ENCODE measurements at regions of chr3 and their contacts with region 1.

Region 1: GRCh38 chr3:7504886-7505775 is 644.2 kb downstream of the GRM7 start:
- DNase-seq: peak; percentile 83
- ATAC-seq: peak; percentile 92
- H3K4me3 ChIP-seq: peak overlapping the region in 1 of 2 experiments; percentile 12; a peak in 2 of 4 replicates
- H3K27ac ChIP-seq: peak overlapping the region; percentile 60
- H3K4me1 ChIP-seq: peaks cover 25 to 38% of the 10 kb centered on the region in 2 experiments
- H3K27me3 ChIP-seq: no peaks in the 10 kb centered on the region
- CTCF ChIP-seq: 0 out of 6 replicates have a peak, but pooled peaks of 1 of the 3 experiments have one; percentile 20
- POLR2A ChIP-seq: no peak
- RAD21 ChIP-seq: peak; percentile 21; the same call in 1 of the 2 replicates

Region 2: GRCh38 chr3:7876741-7877297 is 371.7 kb after region 1 on chr3:
- CTCF ChIA-PET with region 1: no interaction called
- POLR2A ChIA-PET with region 1: no interaction called
- RAD21 ChIA-PET with region 1: no interaction called
- intact Hi-C with region 1: loop called (anchors 5 kb)
- DNase-seq: peak; percentile 97
- ATAC-seq: peak; percentile 80
- H3K4me3 ChIP-seq: peak overlapping the region; percentile 14 to 32
- H3K27ac ChIP-seq: peak overlapping the region; percentile 97
- H3K4me1 ChIP-seq: peaks cover 62 to 78% of the 10 kb centered on the region in 2 experiments
- H3K27me3 ChIP-seq: no peaks in the 10 kb centered on the region
- CTCF ChIP-seq: no peak
- POLR2A ChIP-seq: no peak
- RAD21 ChIP-seq: peak; percentile 41

Measured in HCT116 (cell line).